Activated CD8-positive, alpha-beta T cell treated with anti-CD3 and anti-CD28 coated beads for 36 hours (primary cell): ENCODE measurements at regions of chr2 and their contacts with region 1.

Region 1: DNA sequence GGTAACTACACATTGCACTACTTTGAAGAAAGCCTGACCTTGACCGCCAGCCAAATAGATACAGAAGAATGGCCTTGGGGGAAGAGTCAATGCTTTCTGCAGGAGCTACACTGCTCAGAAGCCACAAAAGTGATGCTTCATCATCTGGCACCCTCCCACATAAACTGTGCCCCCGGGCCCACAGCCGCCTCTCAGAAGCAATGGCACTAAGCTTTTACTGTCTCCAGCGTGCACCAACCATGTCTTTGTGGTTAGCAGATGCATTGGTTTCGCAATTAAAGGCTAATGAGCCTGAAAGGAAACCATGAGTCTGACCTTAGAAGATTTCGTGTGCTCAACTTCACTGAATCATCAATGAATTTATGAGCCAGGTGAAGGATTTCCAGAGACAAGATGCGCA is 209.4 kb upstream of the TRIB2 start:
- DNase-seq: peak; percentile 94
- ATAC-seq: peak; percentile 88
- H3K4me3 Mint-ChIP-seq: no peak overlapping the region
- H3K27ac Mint-ChIP-seq: no peak overlapping the region
- H3K4me1 Mint-ChIP-seq: peaks cover 62% of the 10 kb centered on the region
- H3K27me3 Mint-ChIP-seq: no peaks in the 10 kb centered on the region
- CTCF ChIP-seq: no peak

Region 2: GRCh38 chr2:12005886-12006681 is 501.2 kb before region 1 on chr2:
- CTCF ChIA-PET with region 1: no interaction called
- POLR2A ChIA-PET with region 1: no interaction called
- intact Hi-C with region 1: loop called (anchors 10 kb)
- DNase-seq: peak; percentile 91
- ATAC-seq: peak; percentile 92
- H3K4me3 Mint-ChIP-seq: no peak overlapping the region
- H3K27ac Mint-ChIP-seq: no peak overlapping the region
- H3K4me1 Mint-ChIP-seq: peaks cover 25% of the 10 kb centered on the region
- H3K27me3 Mint-ChIP-seq: peaks cover 51% of the 10 kb centered on the region
- CTCF ChIP-seq: no peak

Region 3: GRCh38 chr2:13212115-13212514 is 704.8 kb after region 1 on chr2:
- CTCF ChIA-PET with region 1: no interaction called
- POLR2A ChIA-PET with region 1: no interaction called
- intact Hi-C with region 1: no loop called
- DNase-seq: no peak
- ATAC-seq: no peak
- H3K4me3 Mint-ChIP-seq: no peak overlapping the region
- H3K27ac Mint-ChIP-seq: no peak overlapping the region
- H3K4me1 Mint-ChIP-seq: no peaks in the 10 kb centered on the region
- H3K27me3 Mint-ChIP-seq: peaks cover under 1% of the 10 kb centered on the region
- CTCF ChIP-seq: no peak